Posterior cingulate gyrus (tissue), 11 donors: ENCODE measurements at regions of chr2 and their contacts with region 1.

Region 1: DNA sequence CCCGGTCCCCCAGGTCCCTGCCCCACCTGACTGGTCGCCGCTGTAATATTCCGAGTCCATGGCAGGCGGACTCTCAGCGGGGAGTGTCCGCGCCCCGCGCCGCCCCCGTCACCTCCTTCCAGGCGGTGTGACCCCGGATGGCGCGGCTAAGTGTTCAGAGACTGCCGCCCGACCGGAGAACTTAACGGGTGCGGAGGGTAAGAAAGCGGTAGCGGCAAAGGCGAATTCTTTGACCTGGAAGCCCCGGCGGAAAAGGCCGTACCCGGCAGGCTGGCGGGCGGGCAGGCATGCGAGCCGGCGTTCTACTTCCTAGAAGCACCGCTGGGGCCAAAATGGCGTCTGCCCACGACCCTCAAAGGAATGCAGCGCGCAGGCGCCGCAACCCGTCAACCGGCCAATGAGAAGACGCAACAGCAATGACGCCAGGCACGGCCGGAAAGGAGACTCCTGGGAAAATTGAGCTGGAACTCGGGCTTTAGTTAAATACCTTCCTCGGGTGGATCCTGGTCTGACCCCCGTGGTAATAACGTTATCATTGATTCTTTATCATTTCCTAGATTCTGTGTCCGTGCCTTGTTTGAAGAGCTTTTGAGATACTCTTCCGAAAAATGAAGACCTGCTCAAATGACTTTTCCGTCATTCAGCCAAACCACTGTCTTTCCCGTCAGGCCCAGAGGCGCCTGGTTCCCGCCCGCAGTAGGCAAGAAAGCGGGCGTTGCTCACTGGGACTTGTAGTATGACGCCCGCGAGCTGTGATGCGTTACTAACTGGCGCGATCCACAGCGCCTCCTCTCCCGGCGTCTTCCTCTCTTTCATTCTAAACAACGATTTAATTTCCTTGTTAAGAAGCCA is at the start of gene IWS1:
- DNase-seq: peak; percentile 91 to 99 (median 94)

Region 2: GRCh38 chr2:127387655-127388422 is 138.5 kb before region 1 on chr2 and contains the start of gene MAP3K2:
- intact Hi-C with region 1: loop called (anchors 1 kb)
- DNase-seq: peak; percentile 79 to 97 (median 84)

Region 3: DNA sequence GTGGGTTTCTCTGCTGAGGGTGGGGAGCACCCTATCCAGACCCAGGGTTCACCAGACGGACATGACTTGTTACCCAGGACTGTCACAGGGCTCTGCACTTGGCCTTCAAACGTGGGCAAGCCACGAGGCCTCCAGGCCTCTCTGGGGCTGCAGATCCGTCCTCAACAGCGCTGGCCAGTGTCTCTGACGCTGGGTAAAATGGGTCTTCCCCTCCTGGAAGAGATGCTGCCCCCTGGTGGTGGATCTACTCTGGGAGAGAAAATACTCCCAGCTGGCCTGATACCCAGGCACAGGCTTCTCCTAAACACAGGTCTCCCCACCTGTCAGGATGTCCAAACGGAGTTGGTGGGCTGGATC is 123.3 kb after region 1 on chr2:
- intact Hi-C with region 1: loop called (anchors 5 kb)
- DNase-seq: peak in 8 of 10 donors; percentile 70 to 95 (median 84)

Region 4: GRCh38 chr2:127701193-127701650 is 174.8 kb after region 1 on chr2 and contains the start of gene SFT2D3:
- intact Hi-C with region 1: loop called (anchors 1 kb)
- DNase-seq: peak; percentile 88 to 99 (median 92)